Stomach (tissue), 19 donors: ENCODE measurements at regions of chr3 and their contacts with region 1.

Region 1: DNA sequence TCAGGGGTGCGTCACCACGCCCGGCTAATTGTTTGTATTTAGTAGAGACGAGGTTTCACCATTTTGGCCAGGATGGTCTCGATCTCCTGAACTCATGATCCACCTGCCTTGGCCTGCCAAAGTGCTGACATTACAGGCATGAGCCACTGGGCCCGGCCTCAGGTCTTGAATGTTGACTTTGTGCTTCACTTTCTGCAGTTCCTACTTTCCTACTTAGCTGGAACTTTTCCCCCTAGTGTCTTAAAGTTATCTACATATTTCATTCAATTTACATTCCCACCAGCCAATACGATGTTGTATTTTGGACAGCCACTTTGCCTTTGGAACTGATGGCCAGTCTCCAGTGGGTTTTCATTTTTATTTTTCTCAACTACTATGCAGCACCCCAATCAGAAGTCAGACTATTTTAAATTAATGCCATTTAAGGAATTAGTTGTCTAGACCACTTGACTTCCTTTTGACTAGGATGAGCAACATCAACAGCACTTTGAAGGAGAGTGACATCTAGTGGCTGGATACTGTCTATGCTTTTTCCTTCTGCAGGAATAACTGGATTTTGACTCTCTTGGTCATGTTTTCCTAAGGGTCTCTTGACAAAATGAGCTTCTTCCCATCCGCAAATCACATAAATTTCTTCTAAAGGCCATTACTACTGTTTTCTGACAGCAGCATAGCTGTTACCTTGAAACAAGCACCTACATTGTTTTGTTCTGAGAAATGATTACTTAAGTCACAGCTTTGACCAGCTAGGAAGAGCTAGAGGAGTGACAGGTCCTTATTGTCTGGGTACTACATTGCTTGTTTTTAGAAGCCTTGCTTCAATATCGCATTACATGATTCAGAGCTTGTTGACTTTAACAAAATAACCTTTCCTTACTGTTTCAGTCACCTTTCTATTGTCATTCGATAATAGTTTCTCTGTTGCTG is 140.2 kb downstream of the ITPR1 start:
- DNase-seq: peak in 1 of 2 donors; percentile 82
- H3K4me3 ChIP-seq: no peak overlapping the region
- H3K27ac ChIP-seq: no peak overlapping the region
- H3K4me1 ChIP-seq: peaks cover 0 to 8% (median 0%) of the 10 kb centered on the region in 4 donors
- H3K27me3 ChIP-seq: no peaks in the 10 kb centered on the region
- CTCF ChIP-seq: peak in 5 of 7 experiments; percentile 65 to 84 (median 79)
- EP300 ChIP-seq: no peak
- POLR2A ChIP-seq: no peak

Region 2: GRCh38 chr3:4350789-4351163 is 282.6 kb before region 1 on chr3:
- intact Hi-C with region 1: loop called (anchors 5 kb)
- DNase-seq: peak in 1 of 2 donors; percentile 90
- H3K4me3 ChIP-seq: peak overlapping the region; percentile 12 to 26 (median 15)
- H3K27ac ChIP-seq: peak overlapping the region in 4 of 5 donors; percentile 9 to 77 (median 48)
- H3K4me1 ChIP-seq: peaks cover 7 to 33% (median 19%) of the 10 kb centered on the region in 4 donors
- H3K27me3 ChIP-seq: no peaks in the 10 kb centered on the region
- CTCF ChIP-seq: peak in 5 of 7 experiments; percentile 52 to 91 (median 84)
- EP300 ChIP-seq: no peak
- POLR2A ChIP-seq: no peak

Region 3: DNA sequence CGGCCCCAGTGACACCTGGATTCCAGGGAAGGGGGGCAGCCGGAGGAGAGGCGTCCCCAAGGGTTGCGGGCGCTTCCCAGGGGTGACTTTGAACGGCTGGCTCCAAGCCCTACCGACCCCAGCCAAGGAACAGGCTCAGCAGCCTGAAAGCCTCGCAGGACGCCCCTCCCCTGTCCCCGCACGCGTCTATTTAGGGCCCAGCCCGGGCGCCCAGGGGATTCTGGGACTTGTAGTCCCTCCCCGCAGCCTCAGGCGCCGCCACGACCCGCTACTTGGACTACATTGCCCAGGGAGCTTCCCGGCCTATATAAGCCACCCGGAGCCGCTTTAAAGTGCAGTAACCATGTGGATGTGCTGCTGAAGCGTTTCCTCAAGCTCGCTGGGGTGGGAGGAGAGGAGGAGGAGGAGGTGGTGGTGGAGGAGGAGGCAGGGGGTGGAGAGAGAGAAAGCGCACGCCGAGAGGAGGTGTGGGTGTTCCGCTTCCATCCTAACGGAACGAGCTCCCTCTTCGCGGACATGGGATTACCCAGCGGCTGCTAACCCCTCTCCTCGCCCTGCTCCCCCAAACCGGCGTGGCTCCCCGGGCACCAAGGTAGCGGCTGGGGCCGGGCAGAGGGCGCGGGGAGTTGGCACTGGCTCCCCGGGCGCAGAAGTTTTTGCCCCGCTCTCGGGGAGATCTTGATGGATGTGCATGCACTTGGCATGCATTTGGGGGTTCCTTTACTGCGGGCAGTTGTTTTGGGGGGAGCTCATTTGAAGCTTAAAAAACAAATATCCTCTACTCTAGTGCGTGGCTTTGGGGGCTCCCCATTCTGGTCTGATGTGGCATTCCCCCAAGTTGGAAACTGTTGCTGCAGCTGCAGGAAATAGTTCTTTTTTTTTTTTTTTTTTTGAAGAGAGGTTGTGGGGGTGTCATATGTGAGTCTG is 140.1 kb before region 1 on chr3 and contains the start of gene ITPR1:
- intact Hi-C with region 1: loop called (anchors 5 kb)
- DNase-seq: peak; percentile 98 to 99
- H3K4me3 ChIP-seq: peak within 1 kb of the TSS; percentile 76 to 96 (median 90)
- H3K27ac ChIP-seq: peak within 1 kb of the TSS; percentile 89 to 94 (median 90)
- H3K4me1 ChIP-seq: peaks cover 6 to 55% (median 48%) of the 10 kb centered on the region in 4 donors
- H3K27me3 ChIP-seq: no peaks in the 10 kb centered on the region
- CTCF ChIP-seq: peak in 2 of 7 experiments; percentile 13 to 36
- EP300 ChIP-seq: no peak
- POLR2A ChIP-seq: peak in 3 of 4 donors; percentile 88 to 99 (median 99)
- total RNA-seq, gene ITPR1: 23.2 to 192 (median 50.3) TPM